Mammary epithelial cell (primary cell): ENCODE measurements at regions of chr14 and their contacts with region 1.

Region 1: DNA sequence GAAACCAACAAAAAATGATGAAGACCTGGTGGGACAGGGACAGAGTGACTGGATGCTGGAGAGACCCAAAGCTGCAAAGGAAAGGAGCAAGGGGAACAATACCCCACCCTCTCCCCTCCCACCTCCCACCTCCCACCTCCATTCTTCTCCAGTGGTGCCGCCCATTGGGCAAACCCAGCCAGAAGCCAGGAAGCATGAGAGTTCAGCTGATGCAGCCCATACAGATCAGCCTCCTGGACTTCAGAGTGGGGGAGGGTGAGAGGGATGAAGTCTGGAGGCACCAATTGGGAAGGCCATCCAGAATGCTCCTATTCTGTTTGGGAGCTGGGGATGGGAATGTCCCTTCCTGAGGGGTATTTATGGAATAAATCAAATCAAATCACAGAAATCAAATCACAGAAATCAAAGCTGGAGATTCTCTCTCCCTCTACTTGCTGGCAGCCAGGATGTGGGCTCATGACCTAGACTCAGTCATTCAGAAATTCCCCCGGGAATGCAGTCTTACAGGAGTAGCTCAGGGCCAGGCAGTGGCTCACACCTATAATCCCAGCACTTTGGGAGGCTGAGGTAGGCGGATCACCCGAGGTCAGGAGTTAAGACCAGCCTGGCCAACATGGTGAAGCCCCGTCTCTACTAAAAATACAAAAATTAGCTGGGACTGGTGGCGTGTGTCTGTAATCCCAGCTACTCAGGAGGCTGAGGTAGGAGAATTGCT is 31.1 kb downstream of the IRF2BPL start:
- DNase-seq: peak; percentile 63
- H3K4me3 ChIP-seq: no peak overlapping the region
- H3K27ac ChIP-seq: no peak overlapping the region
- H3K4me1 ChIP-seq: peaks cover 9% of the 10 kb centered on the region
- H3K27me3 ChIP-seq: no peaks in the 10 kb centered on the region
- CTCF ChIP-seq: no peak

Region 2: DNA sequence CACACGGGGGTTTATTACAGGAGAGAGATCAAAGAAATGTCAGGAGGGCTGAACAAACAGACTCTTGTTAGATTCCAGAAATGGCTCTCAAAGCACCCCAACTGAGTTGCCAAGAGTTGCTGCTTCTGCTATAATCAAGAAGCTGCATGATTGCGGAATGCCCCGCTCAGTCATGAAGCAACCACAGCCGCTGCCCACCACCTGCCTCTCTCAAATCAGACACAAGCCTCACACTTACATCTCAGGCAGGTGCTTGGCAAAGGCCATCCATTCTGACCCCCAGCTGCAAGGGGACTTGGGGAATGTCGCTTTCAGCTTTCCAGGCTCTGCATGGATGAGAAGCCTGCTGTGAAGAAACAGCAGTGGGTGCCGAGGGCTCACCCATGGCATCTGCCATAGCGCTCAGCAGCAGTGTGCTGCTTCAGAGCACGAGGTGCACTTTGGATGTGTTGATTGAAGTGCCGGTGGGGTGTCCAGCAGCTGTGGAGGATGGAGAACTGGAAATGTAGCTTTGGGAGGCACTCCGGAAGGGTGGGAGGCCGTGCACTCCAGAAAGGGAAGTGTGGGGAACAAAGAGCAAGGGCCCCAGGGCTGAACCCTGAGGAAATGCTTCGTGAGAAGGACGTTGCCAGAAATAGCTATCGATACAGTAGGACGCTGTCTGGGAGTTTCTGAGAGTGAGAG is 133.5 kb before region 1 on chr14:
- CTCF ChIA-PET with region 1: no interaction called
- dilution Hi-C with region 1: no loop called
- in situ Hi-C with region 1: no loop called
- intact Hi-C with region 1: no loop called
- DNase-seq: no peak
- H3K4me3 ChIP-seq: no peak overlapping the region
- H3K27ac ChIP-seq: no peak overlapping the region
- H3K4me1 ChIP-seq: no peaks in the 10 kb centered on the region
- H3K27me3 ChIP-seq: peaks cover 2% of the 10 kb centered on the region
- CTCF ChIP-seq: no peak

Region 3: DNA sequence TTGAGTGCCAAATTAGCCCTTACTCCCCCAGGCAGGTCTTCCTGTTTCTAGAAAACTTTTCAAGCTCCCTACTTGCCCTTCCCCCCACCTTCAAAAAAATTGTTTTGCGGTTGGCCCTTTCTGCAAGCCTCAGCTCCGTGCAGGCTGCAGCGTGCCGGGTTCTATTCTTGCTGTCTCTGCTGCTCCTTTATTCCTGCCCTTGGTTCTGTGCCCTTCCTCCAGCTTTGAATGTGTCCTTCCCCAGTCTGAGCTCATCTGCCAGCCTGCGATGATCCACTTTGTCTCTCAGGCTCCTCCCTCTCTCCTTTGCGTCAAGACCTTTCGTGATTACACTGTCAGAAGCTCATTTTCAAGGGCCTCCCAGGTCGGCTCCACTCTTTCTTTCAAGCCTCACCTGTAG is 67.5 kb before region 1 on chr14:
- CTCF ChIA-PET with region 1: no interaction called
- dilution Hi-C with region 1: loop called (anchors 5 kb)
- in situ Hi-C with region 1: no loop called
- intact Hi-C with region 1: no loop called
- DNase-seq: peak; percentile 59
- H3K4me3 ChIP-seq: no peak overlapping the region
- H3K27ac ChIP-seq: no peak overlapping the region
- H3K4me1 ChIP-seq: peaks cover 16% of the 10 kb centered on the region
- H3K27me3 ChIP-seq: no peaks in the 10 kb centered on the region
- CTCF ChIP-seq: no peak

Region 4: DNA sequence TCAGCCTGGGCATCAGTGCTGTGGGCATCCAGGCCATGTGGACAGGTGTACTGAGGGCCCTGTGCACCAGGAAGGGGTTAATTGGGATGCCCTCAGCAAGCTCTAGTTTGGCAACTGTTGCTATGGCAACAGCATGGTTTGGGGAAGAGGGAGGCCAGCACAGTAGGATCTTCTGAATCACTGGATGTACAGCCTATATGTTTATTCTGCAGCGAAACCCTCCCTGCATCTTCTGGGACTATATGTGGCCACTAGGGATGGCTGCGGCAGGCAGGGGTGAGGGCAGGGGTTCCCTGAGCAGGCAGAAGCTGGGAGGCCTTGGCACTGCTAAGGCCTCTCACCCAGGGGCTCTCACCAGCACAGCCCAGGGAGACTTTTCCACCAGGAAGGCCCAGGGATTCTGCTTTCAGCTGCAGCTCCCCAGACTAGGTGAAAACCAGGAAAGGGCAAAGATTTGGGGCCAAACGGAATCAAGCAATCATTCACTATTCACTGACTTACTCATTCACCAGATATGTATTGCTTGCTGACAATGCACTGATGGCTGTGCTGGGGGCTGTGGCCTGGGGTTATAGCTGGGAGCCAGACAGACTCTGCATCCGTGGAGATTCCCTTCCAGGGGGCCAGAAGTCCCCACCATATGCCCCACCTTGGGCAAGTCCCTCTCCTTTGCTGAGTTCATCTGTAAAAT is 11.7 kb before region 1 on chr14:
- CTCF ChIA-PET with region 1: interaction called, 14 read pairs
- dilution Hi-C with region 1: no loop called
- in situ Hi-C with region 1: no loop called
- intact Hi-C with region 1: no loop called
- DNase-seq: no peak
- H3K4me3 ChIP-seq: no peak overlapping the region
- H3K27ac ChIP-seq: no peak overlapping the region
- H3K4me1 ChIP-seq: no peaks in the 10 kb centered on the region
- H3K27me3 ChIP-seq: no peaks in the 10 kb centered on the region
- CTCF ChIP-seq: no peak

Region 5: GRCh38 chr14:77023001-77023996 is 25.9 kb after region 1 on chr14:
- CTCF ChIA-PET with region 1: no interaction called
- dilution Hi-C with region 1: no loop called
- in situ Hi-C with region 1: no loop called
- intact Hi-C with region 1: no loop called
- DNase-seq: peak; percentile 53
- H3K4me3 ChIP-seq: peak overlapping the region; percentile 79 to 89 (median 88)
- H3K27ac ChIP-seq: peak overlapping the region; percentile 49
- H3K4me1 ChIP-seq: peaks cover 25% of the 10 kb centered on the region
- H3K27me3 ChIP-seq: no peaks in the 10 kb centered on the region
- CTCF ChIP-seq: peak; percentile 23 to 41